ENCODE measurements at regions of chr2 and their contacts with region 1.

Region 1: DNA sequence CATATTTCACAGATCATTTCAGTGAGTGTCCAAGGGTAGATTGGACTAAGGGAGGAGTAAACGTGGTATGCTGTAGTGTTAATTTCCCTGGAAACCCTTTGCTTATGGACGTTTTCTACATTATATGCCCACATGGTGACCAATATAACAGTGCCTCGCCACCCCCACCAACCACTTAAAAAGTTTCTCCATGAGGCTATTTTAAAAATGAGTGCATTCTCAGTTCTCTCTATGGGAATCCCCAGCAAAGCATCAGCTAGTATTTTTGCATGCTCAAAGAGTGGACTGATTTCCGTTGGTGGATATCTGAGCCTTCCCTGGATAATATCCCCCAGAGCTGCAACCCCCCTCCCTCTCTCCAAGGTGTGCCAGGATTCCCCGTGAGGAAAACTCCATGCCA is 73.2 kb downstream of the TGFA start:
- DNase-seq: no peak
- H3K4me3 ChIP-seq: no peak overlapping the region
- H3K27ac ChIP-seq: no peak overlapping the region
- H3K4me1 ChIP-seq: peaks cover 28% of the 10 kb centered on the region
- H3K27me3 ChIP-seq: no peaks in the 10 kb centered on the region
- CTCF ChIP-seq: no peak

Region 2: DNA sequence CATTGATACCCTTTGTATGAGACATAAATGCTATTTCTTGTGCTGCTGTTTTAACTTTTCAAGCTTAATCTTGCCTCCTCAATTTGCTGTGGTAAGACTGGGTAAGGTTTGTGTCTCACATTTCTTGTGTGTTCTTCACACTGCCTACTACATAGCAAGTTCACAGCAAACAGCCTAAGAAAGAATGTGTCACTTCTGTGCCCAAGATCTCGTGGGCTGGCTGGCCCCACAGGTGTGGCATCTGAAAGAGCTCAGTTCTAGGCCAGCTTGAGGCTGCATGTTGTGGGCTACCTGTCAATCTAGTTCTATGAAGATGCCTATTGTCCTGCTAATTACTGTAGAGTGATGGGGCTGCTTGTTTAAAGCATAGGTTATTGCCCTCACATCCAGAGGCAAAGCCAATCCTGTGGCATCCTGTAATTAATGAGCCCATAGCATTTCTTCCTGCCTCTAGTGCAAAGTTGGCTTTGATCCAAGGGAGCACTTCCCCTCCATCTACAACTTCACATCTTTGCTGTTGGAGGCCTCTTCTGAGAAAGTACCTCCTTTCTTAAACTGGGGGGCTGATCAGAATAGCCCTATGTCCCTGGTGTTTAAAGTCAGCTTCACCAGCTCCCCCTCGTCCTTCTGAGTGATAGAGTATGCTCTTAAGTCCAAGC is 478.1 kb before region 1 on chr2:
- CTCF ChIA-PET with region 1: no interaction called
- POLR2A ChIA-PET with region 1: no interaction called
- intact Hi-C with region 1: no loop called
- DNase-seq: no peak
- H3K4me3 ChIP-seq: no peak overlapping the region
- H3K27ac ChIP-seq: no peak overlapping the region
- H3K4me1 ChIP-seq: peaks cover 27% of the 10 kb centered on the region
- H3K27me3 ChIP-seq: no peaks in the 10 kb centered on the region
- CTCF ChIP-seq: no peak

Region 3: DNA sequence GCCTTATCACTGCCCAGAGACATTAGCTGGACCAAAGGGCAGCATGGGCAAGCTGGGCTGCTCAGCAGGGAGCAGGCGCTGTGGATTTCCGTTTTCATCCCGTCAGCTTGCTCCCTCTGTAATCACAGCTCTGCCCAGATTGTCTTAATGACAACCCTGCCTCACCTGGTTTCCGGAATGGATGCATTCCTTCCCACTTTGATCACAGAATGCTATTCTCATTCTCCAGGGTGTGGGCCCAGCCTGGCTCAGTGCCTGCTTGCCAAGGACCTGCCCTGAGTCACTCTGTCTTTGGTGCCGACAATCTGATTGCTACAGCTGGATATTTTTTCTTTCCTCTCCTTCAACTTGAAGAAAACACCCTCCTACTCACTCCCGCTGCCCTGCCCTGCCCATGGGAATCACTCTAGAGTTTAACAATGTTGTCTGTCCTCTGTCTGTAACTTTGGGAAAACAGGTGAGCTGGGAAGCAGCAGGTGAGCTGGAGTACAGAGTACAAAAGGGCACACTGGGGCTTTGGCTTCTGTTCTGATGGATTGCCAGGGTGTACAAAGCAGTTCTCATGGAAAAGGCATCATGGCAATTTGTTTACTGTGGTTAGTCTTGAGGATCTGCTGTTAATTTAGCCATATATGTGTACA is 151.4 kb before region 1 on chr2:
- CTCF ChIA-PET with region 1: no interaction called
- POLR2A ChIA-PET with region 1: no interaction called
- intact Hi-C with region 1: loop called (anchors 1 kb)
- DNase-seq: peak; percentile 93 to 97
- H3K4me3 ChIP-seq: peak overlapping the region; percentile 8; the same call in 1 of the 2 replicates
- H3K27ac ChIP-seq: peak overlapping the region; percentile 81
- H3K4me1 ChIP-seq: peaks cover 29% of the 10 kb centered on the region
- H3K27me3 ChIP-seq: no peaks in the 10 kb centered on the region
- CTCF ChIP-seq: no peak

Region 4: DNA sequence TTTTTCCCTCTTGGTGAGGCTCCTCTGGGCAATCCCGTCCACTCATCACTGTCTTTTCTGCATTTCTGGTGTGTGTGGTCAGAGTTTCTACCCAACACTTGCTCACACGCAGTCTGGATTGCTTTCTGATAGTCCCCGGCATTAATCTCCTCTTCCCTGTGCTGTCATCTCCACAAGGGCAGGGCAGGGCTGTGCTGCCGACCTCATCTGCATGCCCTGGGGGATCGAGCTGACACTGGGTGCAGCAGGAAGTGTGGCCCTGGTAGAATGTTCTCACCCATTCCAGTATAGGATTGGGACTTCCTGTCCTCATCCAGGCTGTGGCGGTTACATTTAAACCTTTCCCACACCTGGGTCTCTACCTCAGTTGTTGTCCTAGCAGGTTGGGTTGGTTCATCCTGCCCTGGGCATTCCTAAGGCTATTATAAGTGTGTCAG is 98.6 kb before region 1 on chr2:
- CTCF ChIA-PET with region 1: no interaction called
- POLR2A ChIA-PET with region 1: no interaction called
- intact Hi-C with region 1: loop called (anchors 1 kb)
- DNase-seq: peak; percentile 85 to 97
- H3K4me3 ChIP-seq: peak overlapping the region; percentile 34; the same call in 1 of the 2 replicates
- H3K27ac ChIP-seq: peak overlapping the region; percentile 98
- H3K4me1 ChIP-seq: peaks cover 35% of the 10 kb centered on the region
- H3K27me3 ChIP-seq: no peaks in the 10 kb centered on the region
- CTCF ChIP-seq: no peak

Region 5: GRCh38 chr2:70509553-70509952 is 29.1 kb after region 1 on chr2:
- CTCF ChIA-PET with region 1: interaction called, 3 read pairs
- POLR2A ChIA-PET with region 1: no interaction called
- intact Hi-C with region 1: loop called (anchors 1 kb)
- DNase-seq: peak; percentile 74 to 96
- H3K4me3 ChIP-seq: peak overlapping the region; percentile 35; the same call in 1 of the 2 replicates
- H3K27ac ChIP-seq: peak overlapping the region; percentile 97
- H3K4me1 ChIP-seq: peaks cover 43% of the 10 kb centered on the region
- H3K27me3 ChIP-seq: no peaks in the 10 kb centered on the region
- CTCF ChIP-seq: no peak

Region 6: GRCh38 chr2:70616168-70616694 is 135.8 kb after region 1 on chr2:
- CTCF ChIA-PET with region 1: no interaction called
- POLR2A ChIA-PET with region 1: no interaction called
- intact Hi-C with region 1: loop called (anchors 1 kb)
- DNase-seq: peak; percentile 67 to 96
- H3K4me3 ChIP-seq: no peak overlapping the region
- H3K27ac ChIP-seq: peak overlapping the region; percentile 33; the same call in 1 of the 2 replicates
- H3K4me1 ChIP-seq: peaks cover 24% of the 10 kb centered on the region
- H3K27me3 ChIP-seq: no peaks in the 10 kb centered on the region
- CTCF ChIP-seq: no peak

Region 7: DNA sequence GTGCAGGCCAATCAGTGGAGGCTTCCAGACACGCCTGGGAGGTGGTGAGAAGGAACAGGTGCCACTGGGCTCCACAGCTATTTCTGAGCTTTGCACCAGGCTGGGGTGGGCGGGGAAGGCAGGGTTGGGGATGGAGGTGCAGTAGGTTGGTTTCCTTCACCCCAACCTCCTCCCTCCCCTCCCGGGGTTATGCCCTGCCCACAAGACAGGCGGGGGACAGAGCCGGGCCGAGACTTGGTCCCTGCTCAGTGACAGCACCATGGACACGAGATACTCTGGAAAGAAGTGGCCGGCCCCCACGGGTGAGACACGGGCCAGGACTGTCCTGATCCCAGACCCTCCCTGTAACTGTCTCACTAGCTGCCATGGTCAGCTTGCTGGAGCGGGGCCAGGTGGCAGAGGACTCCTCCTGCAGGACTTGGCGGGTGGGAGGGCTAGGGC is 1032.6 kb after region 1 on chr2:
- CTCF ChIA-PET with region 1: no interaction called
- POLR2A ChIA-PET with region 1: no interaction called
- intact Hi-C with region 1: no loop called
- DNase-seq: no peak
- H3K4me3 ChIP-seq: no peak overlapping the region
- H3K27ac ChIP-seq: no peak overlapping the region
- H3K4me1 ChIP-seq: no peaks in the 10 kb centered on the region
- H3K27me3 ChIP-seq: no peaks in the 10 kb centered on the region
- CTCF ChIP-seq: no peak